Activated CD8-positive, alpha-beta memory T cell treated with anti-CD3 and anti-CD28 coated beads, Interleukin-2, amount 10 ng/mL, durations not matched to agents 7 days and 5 days (primary cell): ENCODE measurements at regions of chr3 and their contacts with region 1.

Region 1: DNA sequence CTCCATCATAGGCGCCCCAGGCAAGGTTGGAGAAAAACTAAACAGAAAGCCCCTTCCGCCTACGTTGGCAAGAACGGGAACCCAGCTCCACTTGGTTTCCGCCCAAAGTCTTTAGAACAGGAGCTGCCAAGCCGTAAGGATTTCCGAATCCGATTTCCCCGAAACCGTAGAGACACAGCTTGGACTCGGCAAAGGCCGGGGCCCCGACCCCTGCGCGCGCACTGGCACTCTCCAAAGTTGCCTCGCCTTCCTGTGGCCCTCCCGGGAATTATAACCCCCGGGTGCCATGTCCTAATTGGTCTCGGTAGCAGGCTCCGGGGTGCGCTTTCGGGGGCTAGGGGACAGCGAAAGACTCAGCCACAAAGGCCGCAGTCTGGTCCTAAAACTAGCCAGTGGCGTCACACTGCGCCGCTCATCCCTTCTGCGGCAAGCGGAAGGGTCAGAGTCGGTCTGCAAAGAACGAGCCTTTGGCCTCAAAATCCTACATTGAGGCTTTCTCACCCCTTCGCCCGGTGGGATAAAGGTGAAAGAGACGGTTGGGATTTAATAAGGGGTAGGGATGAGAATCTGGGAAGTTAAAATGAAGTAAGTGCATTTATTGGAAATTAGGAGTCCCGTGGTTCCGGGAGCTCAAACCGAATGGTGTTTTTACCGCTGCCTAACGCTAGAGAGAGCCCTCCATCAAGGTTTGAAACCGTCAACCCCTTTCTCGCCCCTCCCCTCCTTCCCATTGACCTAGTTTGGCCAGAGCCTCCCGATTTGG is 6.8 kb downstream of the BCL6 start:
- DNase-seq: peak; percentile 87
- ATAC-seq: peak; percentile 37
- H3K4me3 Mint-ChIP-seq: peak overlapping the region; percentile 98
- H3K27ac Mint-ChIP-seq: peak overlapping the region; percentile 99
- H3K4me1 Mint-ChIP-seq: peaks cover 38% of the 10 kb centered on the region
- H3K27me3 Mint-ChIP-seq: peaks cover 10% of the 10 kb centered on the region

Region 2: GRCh38 chr3:187572441-187572840 is 166.1 kb before region 1 on chr3:
- CTCF ChIA-PET with region 1: no interaction called
- DNase-seq: no peak
- ATAC-seq: no peak
- H3K4me3 Mint-ChIP-seq: no peak overlapping the region
- H3K27ac Mint-ChIP-seq: no peak overlapping the region
- H3K4me1 Mint-ChIP-seq: no peaks in the 10 kb centered on the region
- H3K27me3 Mint-ChIP-seq: peaks cover 24% of the 10 kb centered on the region

Region 3: DNA sequence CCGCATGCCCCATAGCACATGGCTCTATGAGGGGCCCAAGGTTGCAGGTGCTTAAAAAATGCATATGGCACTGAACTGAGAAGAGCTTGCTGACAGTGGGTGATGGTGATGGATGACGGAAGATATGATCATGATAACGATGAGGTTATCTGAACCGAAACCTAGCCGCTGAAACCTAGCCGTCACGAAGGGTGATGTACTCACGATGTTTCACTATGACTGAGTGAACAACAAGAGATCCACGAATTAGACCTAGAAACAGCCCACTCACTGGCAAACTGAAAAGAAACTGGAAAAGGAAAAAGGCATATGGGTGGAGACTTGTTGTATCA is 64.4 kb after region 1 on chr3:
- CTCF ChIA-PET with region 1: interaction called, 61 read pairs
- DNase-seq: peak; percentile 93
- ATAC-seq: peak; percentile 76
- H3K4me3 Mint-ChIP-seq: peak overlapping the region; percentile 49
- H3K27ac Mint-ChIP-seq: peak overlapping the region; percentile 100
- H3K4me1 Mint-ChIP-seq: peaks cover 93% of the 10 kb centered on the region
- H3K27me3 Mint-ChIP-seq: no peaks in the 10 kb centered on the region

Region 4: DNA sequence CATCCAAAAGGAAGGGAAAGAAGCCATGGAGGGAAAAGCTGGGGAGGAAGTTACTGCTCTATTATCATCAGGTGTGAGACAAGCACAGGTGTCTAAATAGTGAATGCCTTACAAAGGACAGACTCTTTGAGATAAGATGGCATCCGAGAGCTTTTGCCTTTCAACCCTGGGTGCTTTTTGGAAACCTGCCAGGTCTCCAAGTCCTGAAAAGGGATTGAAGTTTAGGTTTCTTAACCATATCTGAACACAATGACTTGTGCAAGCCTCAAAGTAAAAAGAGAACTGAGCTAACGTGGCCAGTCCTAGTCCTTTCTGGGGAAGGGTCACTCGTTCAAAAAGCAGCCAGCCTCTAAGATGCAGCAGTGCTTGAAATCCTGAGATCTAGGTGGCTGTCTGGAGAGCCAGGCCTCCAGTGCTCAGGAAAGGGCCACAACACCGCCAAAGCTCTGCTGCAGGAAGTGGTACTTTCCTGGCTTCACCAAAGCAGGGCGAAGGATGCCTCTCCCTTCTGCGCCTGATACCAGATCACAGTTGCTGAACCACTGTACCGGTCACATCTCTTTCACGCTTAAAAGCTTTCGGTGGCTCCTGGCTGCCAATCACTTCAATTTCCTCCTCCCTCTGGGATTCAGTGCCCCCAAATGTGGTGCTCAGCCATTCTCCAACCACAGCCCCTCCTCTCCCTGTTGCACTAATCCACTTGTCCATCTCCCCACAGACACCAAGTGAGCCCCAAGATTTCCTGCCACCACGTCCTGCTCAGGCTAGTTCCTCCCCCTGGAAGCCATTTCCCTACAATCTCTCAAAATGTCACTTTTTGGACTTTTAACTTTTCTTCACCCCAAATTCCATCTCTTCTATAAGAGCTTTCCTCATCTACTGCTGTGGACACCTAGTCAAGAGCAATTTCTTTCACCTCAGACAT is 311.4 kb after region 1 on chr3:
- CTCF ChIA-PET with region 1: interaction called, 17 read pairs
- DNase-seq: peak; percentile 72
- ATAC-seq: peak; percentile 92
- H3K4me3 Mint-ChIP-seq: peak overlapping the region; percentile 1
- H3K27ac Mint-ChIP-seq: peak overlapping the region; percentile 61
- H3K4me1 Mint-ChIP-seq: peaks cover 17% of the 10 kb centered on the region
- H3K27me3 Mint-ChIP-seq: peaks cover 5% of the 10 kb centered on the region

Region 5: GRCh38 chr3:188749010-188749617 is 1010.6 kb after region 1 on chr3:
- CTCF ChIA-PET with region 1: interaction called, 44 read pairs
- DNase-seq: peak; percentile 58
- ATAC-seq: peak; percentile 55
- H3K4me3 Mint-ChIP-seq: no peak overlapping the region
- H3K27ac Mint-ChIP-seq: no peak overlapping the region
- H3K4me1 Mint-ChIP-seq: peaks cover 15% of the 10 kb centered on the region
- H3K27me3 Mint-ChIP-seq: peaks cover 3% of the 10 kb centered on the region

Region 6: DNA sequence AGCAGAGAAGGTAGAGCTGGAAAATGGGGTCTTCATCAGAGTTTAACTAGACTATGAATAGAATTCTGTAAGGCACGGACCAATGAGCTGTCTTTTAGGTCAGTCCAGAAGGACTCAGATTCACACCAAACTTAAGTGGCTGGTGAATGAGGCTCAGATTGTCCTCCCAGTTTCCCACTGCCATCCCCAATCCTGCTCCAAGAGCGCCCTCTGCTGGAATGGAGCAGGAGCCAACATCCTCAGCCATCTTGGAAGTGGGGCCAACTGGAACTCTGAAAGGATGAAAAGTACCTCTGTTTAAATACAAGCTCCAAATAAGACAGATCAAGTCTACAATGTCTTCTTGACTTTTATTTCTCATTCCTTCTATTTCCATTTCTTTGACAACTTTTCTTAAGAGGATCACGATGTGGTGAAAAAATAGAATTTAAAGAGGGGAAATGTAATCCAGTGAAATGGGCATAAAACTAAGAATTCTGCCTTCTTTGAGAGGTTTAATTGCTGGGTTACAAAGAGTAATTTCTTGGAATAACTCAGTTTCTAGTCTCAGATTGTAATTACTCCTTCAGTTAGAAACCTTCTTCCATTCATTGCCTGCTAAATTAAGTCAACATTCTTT is 1216.2 kb after region 1 on chr3:
- CTCF ChIA-PET with region 1: interaction called, 391 read pairs
- DNase-seq: peak; percentile 83
- ATAC-seq: peak; percentile 82
- H3K4me3 Mint-ChIP-seq: no peak overlapping the region
- H3K27ac Mint-ChIP-seq: no peak overlapping the region
- H3K4me1 Mint-ChIP-seq: peaks cover 13% of the 10 kb centered on the region
- H3K27me3 Mint-ChIP-seq: no peaks in the 10 kb centered on the region

Region 7: DNA sequence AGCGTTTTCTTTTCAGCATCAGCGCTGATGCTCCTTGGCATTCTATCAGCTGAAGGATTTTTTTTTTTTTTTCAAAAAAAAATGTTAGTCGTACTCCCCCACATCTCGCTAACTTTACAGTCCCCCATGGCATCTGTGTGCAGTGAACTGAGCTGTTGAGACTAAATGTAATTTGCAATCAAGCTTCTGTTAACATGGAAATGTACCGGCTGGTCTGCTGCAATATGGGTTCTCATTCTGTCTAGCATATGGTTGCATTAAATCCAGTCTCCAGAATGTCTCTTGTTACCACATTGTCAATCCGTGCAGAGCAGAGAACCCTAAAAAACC is 1401.1 kb after region 1 on chr3:
- CTCF ChIA-PET with region 1: interaction called, 95 read pairs
- DNase-seq: no peak
- ATAC-seq: no peak
- H3K4me3 Mint-ChIP-seq: no peak overlapping the region
- H3K27ac Mint-ChIP-seq: no peak overlapping the region
- H3K4me1 Mint-ChIP-seq: peaks cover 32% of the 10 kb centered on the region
- H3K27me3 Mint-ChIP-seq: no peaks in the 10 kb centered on the region